ENCODE measurements at regions of chr12 and their contacts with region 1.

Region 1: GRCh38 chr12:132189378-132190011 is 45.2 kb downstream of the NOC4L start:
- DNase-seq: peak; percentile 93
- H3K4me3 Mint-ChIP-seq: peak overlapping the region; percentile 93
- H3K27ac Mint-ChIP-seq: peak overlapping the region; percentile 82
- H3K4me1 Mint-ChIP-seq: peaks cover 27% of the 10 kb centered on the region
- H3K27me3 Mint-ChIP-seq: peaks cover 7% of the 10 kb centered on the region

Region 2: DNA sequence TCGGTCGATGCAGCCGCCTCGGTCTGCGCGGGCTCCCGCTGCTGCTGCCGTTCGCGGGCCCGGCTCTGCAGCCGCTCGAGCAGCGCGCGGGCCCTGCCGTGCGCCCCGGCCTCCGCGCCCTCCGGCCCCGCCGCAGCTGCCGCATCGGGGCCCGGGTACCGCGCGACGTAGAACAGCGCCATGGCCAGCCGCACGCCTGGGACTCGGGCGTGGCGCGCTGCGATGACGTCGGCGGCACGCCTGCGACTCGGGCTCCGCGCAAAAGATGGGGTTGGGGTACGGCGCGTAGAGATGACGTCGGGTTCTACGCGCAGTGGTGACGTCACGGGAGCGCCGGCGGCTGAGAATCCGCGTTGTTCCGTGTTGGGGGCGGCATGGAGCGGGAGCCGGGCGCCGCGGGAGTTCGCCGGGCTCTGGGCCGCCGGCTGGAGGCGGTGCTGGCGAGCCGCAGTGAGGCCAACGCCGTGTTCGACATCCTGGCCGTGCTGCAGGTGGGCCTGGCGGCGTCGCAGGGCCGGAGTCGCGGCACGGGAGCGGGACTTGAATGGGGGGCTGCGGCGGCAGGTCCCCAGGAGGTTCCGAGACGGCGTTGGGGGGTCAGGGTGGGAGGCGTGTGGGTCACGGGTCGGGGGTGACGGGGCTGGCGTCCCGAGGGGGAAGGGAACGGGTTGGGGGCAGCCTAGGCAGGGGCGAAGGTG is 45.2 kb before region 1 on chr12 and contains the starts of genes DDX51 and NOC4L:
- intact Hi-C with region 1: loop called (anchors 1 kb)
- DNase-seq: peak; percentile 95
- H3K4me3 Mint-ChIP-seq: peak within 1 kb of the TSS; percentile 88
- H3K27ac Mint-ChIP-seq: peak within 1 kb of the TSS; percentile 93
- H3K4me1 Mint-ChIP-seq: peaks cover 16% of the 10 kb centered on the region
- H3K27me3 Mint-ChIP-seq: no peaks in the 10 kb centered on the region
- total RNA-seq, gene DDX51: 36.7 and 37.6 TPM in 2 replicates
- total RNA-seq, gene NOC4L: 39.3 and 39.8 TPM in 2 replicates

Measured in activated T-helper 2 cell treated with anti-CD3 and anti-CD28 coated beads, Interferon-gamma antibody, Interleukin-2, Interleukin-4, amounts not matched to agents 10 μg/mL and 5 μg/mL and 100 μg/mL, durations not matched to agents 14 hours and 24 hours and 36 hours (primary cell).